ENCODE measurements at regions of chr12 and their contacts with region 1.

Region 1: GRCh38 chr12:27434673-27435565 is 11.6 kb upstream of the SMCO2 start:
- DNase-seq: no peak
- ATAC-seq: peak; percentile 47

Region 2: DNA sequence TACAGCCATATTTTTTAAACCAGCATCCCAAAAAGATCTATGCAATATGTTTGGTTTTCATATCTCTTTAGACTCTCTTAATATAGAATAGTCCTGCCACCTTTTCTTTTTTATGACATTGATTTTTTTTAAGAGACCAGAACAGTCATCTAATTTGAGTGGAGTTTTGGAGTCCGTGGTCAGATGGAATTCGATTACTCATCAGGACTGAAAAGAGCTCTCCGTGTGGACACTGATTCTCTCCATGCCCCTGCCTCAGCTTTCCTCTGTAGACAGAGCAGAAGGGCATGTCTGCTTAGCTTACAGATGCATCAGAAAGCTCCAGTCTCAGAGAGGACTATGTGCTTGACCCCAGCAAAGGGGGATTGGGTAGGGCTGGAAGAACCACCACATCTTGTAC is 39.4 kb after region 1 on chr12:
- intact Hi-C with region 1: loop called (anchors 5 kb)
- DNase-seq: no peak
- ATAC-seq: no peak